Transverse colon (tissue), 4 donors: ENCODE measurements at regions of chrX and their contacts with region 1.

Region 1: GRCh38 chrX:15143050-15143824 is 126.6 kb downstream of the ASB9 start:
- DNase-seq: peak; percentile 66
- H3K4me3 ChIP-seq: no peak overlapping the region
- H3K27ac ChIP-seq: peak overlapping the region in 1 of 4 donors; percentile 50
- H3K4me1 ChIP-seq: no peaks in the 10 kb centered on the region
- H3K27me3 ChIP-seq: no peaks in the 10 kb centered on the region
- CTCF ChIP-seq: peak; percentile 52 to 75 (median 62)
- EP300 ChIP-seq: no peak
- POLR2A ChIP-seq: no peak

Region 2: DNA sequence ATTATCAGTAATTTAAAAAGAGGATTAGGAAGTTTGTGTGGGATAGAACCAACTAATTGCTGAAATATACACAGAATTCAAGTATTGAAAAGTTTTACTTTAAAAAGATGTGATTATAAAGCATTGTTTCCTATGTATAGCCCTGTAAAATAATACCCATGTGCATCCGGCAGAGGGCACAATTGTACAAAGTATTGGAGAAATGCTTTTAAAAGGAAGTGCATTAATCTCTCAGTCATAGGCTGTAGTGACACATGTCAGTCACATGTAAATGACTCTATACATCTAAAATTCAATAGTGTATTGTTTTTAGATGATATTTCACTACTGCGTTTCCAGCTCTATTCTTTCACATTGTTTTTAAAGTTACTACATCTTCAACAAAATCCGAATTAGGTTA is 1103.9 kb before region 1 on chrX:
- in situ Hi-C with region 1: loop called in 1 of 4 experiments (anchors 10 kb)
- intact Hi-C with region 1: loop called (anchors 5 kb)
- DNase-seq: peak; percentile 61
- H3K4me3 ChIP-seq: no peak overlapping the region
- H3K27ac ChIP-seq: no peak overlapping the region
- H3K4me1 ChIP-seq: no peaks in the 10 kb centered on the region
- H3K27me3 ChIP-seq: no peaks in the 10 kb centered on the region
- CTCF ChIP-seq: peak; percentile 50 to 69 (median 54)
- EP300 ChIP-seq: no peak
- POLR2A ChIP-seq: no peak

Region 3: DNA sequence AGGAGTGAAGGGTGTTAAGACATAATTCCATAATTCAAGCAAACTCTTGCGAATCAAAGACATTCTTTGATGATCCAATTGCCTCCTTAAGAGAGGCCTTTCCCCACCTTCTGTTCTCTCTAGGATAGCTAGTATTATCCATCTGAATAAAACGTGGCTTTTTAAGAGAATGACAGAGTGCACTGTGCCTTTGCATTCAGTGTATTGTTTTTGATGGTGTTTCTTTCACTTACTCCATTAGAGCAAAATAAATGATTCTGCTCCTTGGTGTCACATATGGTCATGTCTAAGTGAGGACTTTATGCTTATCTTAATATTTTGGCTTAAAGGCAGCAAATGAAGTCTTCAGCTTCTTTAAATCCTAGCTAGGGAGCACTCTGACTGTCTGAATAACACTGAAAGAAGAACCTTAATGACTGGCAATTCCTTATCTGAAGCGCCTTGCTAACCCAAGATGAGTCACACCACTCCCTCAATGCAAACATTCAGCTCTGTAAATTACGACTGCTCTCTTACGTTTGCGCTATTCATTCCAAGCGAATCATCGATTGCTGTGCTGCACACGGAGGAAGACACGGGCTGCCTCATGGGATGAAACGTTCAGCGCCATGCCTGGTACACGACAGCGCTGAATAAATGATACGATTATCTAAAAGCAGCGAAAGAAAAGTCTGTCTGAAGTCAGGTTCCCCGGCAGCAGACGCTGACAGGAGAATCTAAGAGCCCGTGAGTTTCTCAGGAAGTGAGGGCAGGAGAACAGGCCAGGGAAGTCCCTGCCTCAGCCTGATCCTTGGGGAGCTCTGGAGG is 1078.4 kb before region 1 on chrX:
- in situ Hi-C with region 1: loop called in 2 of 4 experiments (anchors 25 kb)
- intact Hi-C with region 1: no loop called
- DNase-seq: peak; percentile 38
- H3K4me3 ChIP-seq: no peak overlapping the region
- H3K27ac ChIP-seq: peak overlapping the region in 2 of 4 donors; percentile 28 to 45
- H3K4me1 ChIP-seq: no peaks in the 10 kb centered on the region
- H3K27me3 ChIP-seq: no peaks in the 10 kb centered on the region
- CTCF ChIP-seq: no peak
- EP300 ChIP-seq: no peak
- POLR2A ChIP-seq: no peak